Activated CD4-positive, alpha-beta memory T cell treated with anti-CD3 and anti-CD28 coated beads, Interleukin-2, amount 10 ng/mL, durations not matched to agents 7 days and 5 days (primary cell): ENCODE measurements at regions of chr17 and their contacts with region 1.

Region 1: GRCh38 chr17:55533608-55534007 is 22.4 kb upstream of the SMIM36 start:
- DNase-seq: no peak
- H3K4me3 Mint-ChIP-seq: no peak overlapping the region
- H3K27ac Mint-ChIP-seq: no peak overlapping the region
- H3K4me1 Mint-ChIP-seq: no peaks in the 10 kb centered on the region
- H3K27me3 Mint-ChIP-seq: peaks cover 21% of the 10 kb centered on the region

Region 2: GRCh38 chr17:55549140-55549539 is 15.5 kb after region 1 on chr17:
- CTCF ChIA-PET with region 1: no interaction called
- POLR2A ChIA-PET with region 1: no interaction called
- DNase-seq: no peak
- H3K4me3 Mint-ChIP-seq: no peak overlapping the region
- H3K27ac Mint-ChIP-seq: no peak overlapping the region
- H3K4me1 Mint-ChIP-seq: peaks cover 6% of the 10 kb centered on the region
- H3K27me3 Mint-ChIP-seq: peaks cover 19% of the 10 kb centered on the region

Region 3: DNA sequence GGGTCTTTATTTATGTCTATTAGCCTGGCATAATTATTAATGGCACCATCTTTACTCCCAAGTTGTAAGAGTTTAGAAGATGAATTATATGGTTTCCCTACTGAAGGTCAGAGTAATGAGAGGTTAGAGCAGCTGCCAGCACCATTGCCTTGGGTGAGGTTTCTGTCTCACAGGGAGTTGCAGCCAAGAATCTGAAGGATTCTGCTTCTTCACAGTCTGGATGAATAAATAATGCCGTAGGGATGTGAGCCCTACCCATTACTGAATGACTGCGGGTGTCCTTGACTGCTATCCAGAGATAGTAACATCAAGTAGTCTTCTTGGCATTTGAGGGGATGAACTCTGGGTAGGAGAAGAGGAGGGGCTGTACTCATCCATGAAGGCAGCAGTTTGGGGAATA is 30.5 kb after region 1 on chr17:
- CTCF ChIA-PET with region 1: no interaction called
- POLR2A ChIA-PET with region 1: no interaction called
- DNase-seq: no peak
- H3K4me3 Mint-ChIP-seq: no peak overlapping the region
- H3K27ac Mint-ChIP-seq: no peak overlapping the region
- H3K4me1 Mint-ChIP-seq: peaks cover 24% of the 10 kb centered on the region
- H3K27me3 Mint-ChIP-seq: peaks cover 2% of the 10 kb centered on the region

Region 4: GRCh38 chr17:55601874-55602364 is 68.3 kb after region 1 on chr17:
- CTCF ChIA-PET with region 1: interaction called, 11 read pairs
- POLR2A ChIA-PET with region 1: no interaction called
- DNase-seq: no peak
- H3K4me3 Mint-ChIP-seq: no peak overlapping the region
- H3K27ac Mint-ChIP-seq: no peak overlapping the region
- H3K4me1 Mint-ChIP-seq: no peaks in the 10 kb centered on the region
- H3K27me3 Mint-ChIP-seq: peaks cover 30% of the 10 kb centered on the region